ENCODE measurements at regions of chr7 and their contacts with region 1.

Region 1: DNA sequence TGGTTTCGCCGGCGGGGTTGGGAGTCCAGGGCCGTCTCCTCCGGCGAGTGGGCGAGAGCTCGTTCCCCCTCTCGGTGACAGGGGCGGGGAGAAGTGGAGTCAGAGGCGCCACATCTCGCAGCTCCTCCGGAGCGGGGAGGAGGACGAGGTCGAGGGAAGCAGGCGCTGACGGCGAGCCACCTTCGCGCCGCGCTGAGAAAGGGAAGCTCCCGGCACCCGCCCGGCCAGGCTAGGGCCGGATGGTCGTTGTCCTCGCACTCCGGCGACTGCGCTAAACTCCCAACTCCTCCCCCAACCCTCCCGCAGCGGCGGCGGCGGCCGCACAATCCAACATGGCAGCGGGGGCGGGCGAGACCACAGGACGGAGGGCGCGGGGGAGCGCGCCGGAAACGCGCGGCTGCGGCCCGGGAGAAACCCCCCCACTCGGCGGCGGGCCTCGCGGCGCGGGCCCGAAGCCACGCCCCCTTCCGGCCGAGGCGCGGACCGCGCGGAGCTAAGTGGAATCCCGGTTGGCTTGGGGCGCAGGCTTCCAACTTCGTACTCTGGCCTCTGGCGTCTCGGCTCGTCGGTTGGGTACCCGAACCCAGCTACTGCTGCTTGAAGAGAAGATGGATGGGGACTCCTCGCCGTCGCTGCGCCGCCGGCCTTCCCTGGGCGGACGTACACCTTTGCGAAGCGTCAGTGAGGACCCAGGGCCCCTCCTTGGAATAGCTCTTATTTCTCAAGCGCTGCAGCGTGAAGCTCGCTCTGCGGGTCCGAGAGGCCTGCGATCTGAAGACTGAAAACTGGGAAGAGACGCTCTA is at the start of gene WASL:
- DNase-seq: peak; percentile 94
- total RNA-seq, gene WASL: 32.5 TPM

Region 2: GRCh38 chr7:123709525-123709924 is 39.4 kb before region 1 on chr7:
- intact Hi-C with region 1: loop called (anchors 5 kb)
- DNase-seq: no peak

Measured in cardiac septum (tissue), 1 donor.